CD8-positive, alpha-beta T cell (primary cell): ENCODE measurements at regions of chr13 and their contacts with region 1.

Region 1: GRCh38 chr13:100514788-100515409 is 73.7 kb downstream of the GGACT start:
- DNase-seq: peak; percentile 29 to 82 (median 74)
- ATAC-seq: peak; percentile 96
- H3K4me3 ChIP-seq: no peak overlapping the region
- H3K4me3 Mint-ChIP-seq: no peak overlapping the region
- H3K27ac ChIP-seq: no peak overlapping the region
- H3K27ac Mint-ChIP-seq: no peak overlapping the region
- H3K4me1 ChIP-seq: no peaks in the 10 kb centered on the region
- H3K4me1 Mint-ChIP-seq: peaks cover 13% of the 10 kb centered on the region
- H3K27me3 ChIP-seq: no peaks in the 10 kb centered on the region
- H3K27me3 Mint-ChIP-seq: no peaks in the 10 kb centered on the region
- CTCF ChIP-seq: peak; percentile 97

Region 2: GRCh38 chr13:99165753-99166587 is 1348.9 kb before region 1 on chr13:
- CTCF ChIA-PET with region 1: no interaction called
- POLR2A ChIA-PET with region 1: no interaction called
- intact Hi-C with region 1: loop called in 1 of 2 experiments (anchors 10 kb)
- DNase-seq: no peak
- ATAC-seq: no peak
- H3K4me3 ChIP-seq: no peak overlapping the region
- H3K4me3 Mint-ChIP-seq: no peak overlapping the region
- H3K27ac ChIP-seq: no peak overlapping the region
- H3K27ac Mint-ChIP-seq: no peak overlapping the region
- H3K4me1 ChIP-seq: no peaks in the 10 kb centered on the region
- H3K4me1 Mint-ChIP-seq: no peaks in the 10 kb centered on the region
- H3K27me3 ChIP-seq: no peaks in the 10 kb centered on the region
- H3K27me3 Mint-ChIP-seq: no peaks in the 10 kb centered on the region
- CTCF ChIP-seq: no peak

Region 3: GRCh38 chr13:99528547-99528946 is 986.4 kb before region 1 on chr13:
- CTCF ChIA-PET with region 1: interaction called, 3 read pairs
- POLR2A ChIA-PET with region 1: no interaction called
- intact Hi-C with region 1: loop called in 1 of 2 experiments (anchors 2 kb)
- DNase-seq: peak in 4 of 9 experiments; percentile 13 to 59 (median 36)
- ATAC-seq: peak; percentile 46
- H3K4me3 ChIP-seq: no peak overlapping the region
- H3K4me3 Mint-ChIP-seq: no peak overlapping the region
- H3K27ac ChIP-seq: no peak overlapping the region
- H3K27ac Mint-ChIP-seq: no peak overlapping the region
- H3K4me1 ChIP-seq: peaks cover 12% of the 10 kb centered on the region
- H3K4me1 Mint-ChIP-seq: peaks cover 46% of the 10 kb centered on the region
- H3K27me3 ChIP-seq: no peaks in the 10 kb centered on the region
- H3K27me3 Mint-ChIP-seq: no peaks in the 10 kb centered on the region
- CTCF ChIP-seq: peak; percentile 32

Region 4: GRCh38 chr13:99916366-99917103 is 598.4 kb before region 1 on chr13:
- CTCF ChIA-PET with region 1: interaction called, 22 read pairs
- POLR2A ChIA-PET with region 1: no interaction called
- intact Hi-C with region 1: loop called in 1 of 2 experiments (anchors 1 kb)
- DNase-seq: peak in 2 of 9 experiments; percentile 60 to 73
- ATAC-seq: peak; percentile 86
- H3K4me3 ChIP-seq: no peak overlapping the region
- H3K4me3 Mint-ChIP-seq: no peak overlapping the region
- H3K27ac ChIP-seq: no peak overlapping the region
- H3K27ac Mint-ChIP-seq: no peak overlapping the region
- H3K4me1 ChIP-seq: no peaks in the 10 kb centered on the region
- H3K4me1 Mint-ChIP-seq: peaks cover 11% of the 10 kb centered on the region
- H3K27me3 ChIP-seq: no peaks in the 10 kb centered on the region
- H3K27me3 Mint-ChIP-seq: peaks cover 17% of the 10 kb centered on the region
- CTCF ChIP-seq: peak; percentile 83

Region 5: DNA sequence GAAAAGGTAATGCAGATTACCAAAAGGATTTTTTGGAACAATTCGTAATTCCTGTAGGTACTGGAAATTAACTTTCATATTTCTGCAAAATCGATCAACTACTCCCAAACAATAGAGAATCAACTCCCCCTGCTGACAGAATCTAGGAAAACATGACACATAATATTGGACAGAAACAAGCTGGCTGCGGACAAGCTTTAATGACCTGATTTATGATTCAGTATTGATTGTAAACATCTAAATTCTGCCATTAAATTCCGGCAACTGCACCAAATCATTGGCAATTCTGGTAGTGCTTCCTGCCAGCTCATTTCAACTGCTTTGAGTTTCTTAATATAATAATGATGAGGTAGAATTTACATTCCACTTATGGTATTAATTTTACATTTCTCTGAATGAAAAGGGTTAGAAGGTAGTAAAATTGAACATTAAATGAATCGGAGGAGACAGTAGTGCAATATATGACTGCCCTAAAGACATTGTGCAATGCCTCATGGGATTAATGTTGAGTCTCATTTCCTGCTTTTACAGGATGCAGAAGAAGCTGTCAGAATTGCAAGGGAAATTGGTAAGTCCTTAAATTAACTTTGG is 279.5 kb before region 1 on chr13:
- CTCF ChIA-PET with region 1: interaction called, 3 read pairs
- POLR2A ChIA-PET with region 1: no interaction called
- intact Hi-C with region 1: loop called (anchors 2 to 10 kb)
- DNase-seq: peak in 3 of 9 experiments; percentile 15 to 66 (median 57)
- ATAC-seq: no peak
- H3K4me3 ChIP-seq: no peak overlapping the region
- H3K4me3 Mint-ChIP-seq: no peak overlapping the region
- H3K27ac ChIP-seq: no peak overlapping the region
- H3K27ac Mint-ChIP-seq: no peak overlapping the region
- H3K4me1 ChIP-seq: peaks cover 9% of the 10 kb centered on the region
- H3K4me1 Mint-ChIP-seq: peaks cover 4% of the 10 kb centered on the region
- H3K27me3 ChIP-seq: no peaks in the 10 kb centered on the region
- H3K27me3 Mint-ChIP-seq: no peaks in the 10 kb centered on the region
- CTCF ChIP-seq: peak; percentile 62

Region 6: DNA sequence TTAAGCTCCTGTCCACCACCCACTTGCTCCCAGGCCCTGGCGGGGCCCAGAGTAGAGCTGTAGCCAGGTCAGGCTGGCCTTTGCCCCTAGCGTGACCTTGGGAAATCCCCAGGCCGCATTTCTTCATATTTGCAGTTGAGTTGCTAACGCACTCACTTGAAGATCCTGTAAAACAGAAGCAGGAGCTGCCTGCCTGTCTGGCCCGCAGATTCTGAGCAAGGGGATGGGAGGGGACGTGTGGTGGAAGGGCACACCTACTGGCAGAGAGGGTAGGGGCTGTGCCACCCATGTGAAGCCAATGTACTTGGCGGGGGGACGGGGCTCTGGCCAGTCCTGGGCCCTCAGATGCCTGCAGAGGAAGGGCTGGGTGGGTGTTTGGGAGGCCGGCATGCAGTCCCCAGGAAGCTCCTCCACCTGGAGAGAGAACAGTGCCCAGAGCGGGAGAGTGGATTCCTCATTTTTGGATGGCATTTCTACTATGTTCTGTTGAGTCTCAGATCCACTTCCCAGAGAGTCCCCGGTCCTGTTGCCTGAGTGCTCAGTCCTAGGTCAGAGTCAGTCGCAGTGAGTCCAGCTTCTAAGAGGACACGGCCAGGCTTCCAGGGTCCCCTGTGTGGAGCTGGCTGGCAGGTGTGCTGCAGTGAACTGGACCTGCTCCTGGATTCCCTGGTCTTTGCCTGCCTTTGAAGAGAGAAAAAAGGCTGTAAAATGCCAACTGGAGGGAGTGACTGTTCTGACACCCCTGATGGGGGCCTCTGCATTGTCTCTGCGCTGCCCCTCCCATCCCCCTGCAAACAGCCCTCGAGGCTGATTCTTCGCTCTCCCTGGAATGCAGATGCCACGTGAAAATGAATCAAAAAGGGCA is 10.8 kb after region 1 on chr13:
- CTCF ChIA-PET with region 1: interaction called, 14 read pairs
- POLR2A ChIA-PET with region 1: no interaction called
- intact Hi-C with region 1: no loop called
- DNase-seq: peak in 1 of 9 experiments; percentile 34
- ATAC-seq: no peak
- H3K4me3 ChIP-seq: no peak overlapping the region
- H3K4me3 Mint-ChIP-seq: no peak overlapping the region
- H3K27ac ChIP-seq: no peak overlapping the region
- H3K27ac Mint-ChIP-seq: no peak overlapping the region
- H3K4me1 ChIP-seq: peaks cover 13% of the 10 kb centered on the region
- H3K4me1 Mint-ChIP-seq: peaks cover 12% of the 10 kb centered on the region
- H3K27me3 ChIP-seq: no peaks in the 10 kb centered on the region
- H3K27me3 Mint-ChIP-seq: no peaks in the 10 kb centered on the region
- CTCF ChIP-seq: no peak